WTC11 (cell line): ENCODE measurements at regions of chr16 and their contacts with region 1.

Region 1: DNA sequence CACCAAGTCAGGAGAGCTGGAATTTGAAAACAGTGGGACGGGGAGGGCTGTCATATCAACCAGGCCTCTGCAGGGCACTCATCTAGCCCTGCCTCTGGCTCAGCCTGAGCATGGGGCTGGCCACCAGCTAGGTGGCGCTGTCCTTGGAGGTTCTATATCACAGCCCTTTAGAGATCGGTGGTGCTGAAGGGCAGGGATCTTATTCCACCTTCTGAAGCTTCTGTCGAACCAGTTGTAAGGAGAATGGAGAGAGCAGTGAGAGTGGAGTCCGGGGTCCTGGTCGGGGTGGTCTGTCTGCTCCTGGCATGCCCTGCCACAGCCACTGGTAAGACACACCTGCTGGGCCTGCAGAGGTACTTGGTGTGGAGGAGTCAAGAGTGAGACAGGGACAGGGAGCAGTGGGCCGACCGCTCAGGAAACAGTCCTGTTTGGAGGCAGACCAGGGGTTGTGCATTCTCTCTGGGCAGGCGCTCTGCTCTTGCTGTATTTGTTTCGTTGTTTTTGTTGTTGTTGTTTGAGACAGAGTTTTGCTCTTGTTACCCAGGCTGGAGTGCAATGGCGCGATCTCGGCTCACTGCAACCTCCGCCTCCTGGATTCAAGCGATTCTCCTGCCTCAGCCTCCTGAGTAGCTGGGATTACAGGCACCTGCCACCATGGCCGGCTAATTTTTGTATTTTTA is at the start of gene CES3:
- DNase-seq: peak; percentile 91
- ATAC-seq: peak; percentile 100
- H3K4me3 Mint-ChIP-seq: peak within 1 kb of the TSS; percentile 66
- H3K27ac Mint-ChIP-seq: peak within 1 kb of the TSS; percentile 56
- H3K4me1 Mint-ChIP-seq: peaks cover 9% of the 10 kb centered on the region
- H3K27me3 Mint-ChIP-seq: peaks cover 8% of the 10 kb centered on the region; the same call in 1 of the 2 replicates
- CTCF ChIP-seq: peak; percentile 72
- total RNA-seq, gene CES3: 3.3 to 6.0 TPM (median 5.7 TPM) in 3 replicates

Region 2: GRCh38 chr16:66639091-66639885 is 321.9 kb before region 1 on chr16:
- CTCF ChIA-PET with region 1: no interaction called
- POLR2A ChIA-PET with region 1: no interaction called
- DNase-seq: no peak
- ATAC-seq: no peak; the same call in 1 of the 2 replicates
- H3K4me3 Mint-ChIP-seq: no peak overlapping the region
- H3K27ac Mint-ChIP-seq: peak overlapping the region; percentile 39
- H3K4me1 Mint-ChIP-seq: peaks cover 37% of the 10 kb centered on the region
- H3K27me3 Mint-ChIP-seq: no peaks in the 10 kb centered on the region
- CTCF ChIP-seq: no peak

Region 3: DNA sequence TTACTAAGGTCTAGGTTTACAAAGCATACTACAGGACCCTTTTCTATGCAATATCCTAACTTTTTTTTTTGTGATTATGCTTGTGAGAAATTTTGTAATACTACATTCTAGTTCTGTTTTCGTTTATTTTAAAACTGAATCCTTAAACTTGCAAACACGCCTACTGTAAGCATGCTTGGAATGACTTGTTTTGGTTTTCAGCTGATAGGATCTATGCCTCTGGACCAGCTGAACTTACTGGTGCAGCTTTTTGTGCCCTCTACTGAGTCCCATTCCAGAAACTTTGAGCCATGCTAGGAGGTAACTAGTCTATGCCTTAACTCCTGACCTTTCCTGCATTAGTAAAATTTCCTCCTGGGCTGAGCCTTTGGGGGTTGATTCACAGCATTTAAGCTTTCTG is 74.9 kb before region 1 on chr16:
- CTCF ChIA-PET with region 1: no interaction called
- POLR2A ChIA-PET with region 1: no interaction called
- DNase-seq: no peak
- ATAC-seq: no peak
- H3K4me3 Mint-ChIP-seq: no peak overlapping the region
- H3K27ac Mint-ChIP-seq: no peak overlapping the region
- H3K4me1 Mint-ChIP-seq: peaks cover 19% of the 10 kb centered on the region
- H3K27me3 Mint-ChIP-seq: no peaks in the 10 kb centered on the region
- CTCF ChIP-seq: no peak

Region 4: GRCh38 chr16:66924527-66925321 is 36.5 kb before region 1 on chr16:
- CTCF ChIA-PET with region 1: interaction called, 16 read pairs
- POLR2A ChIA-PET with region 1: no interaction called
- DNase-seq: peak; percentile 74
- ATAC-seq: peak; percentile 85
- H3K4me3 Mint-ChIP-seq: peak overlapping the region; percentile 73
- H3K27ac Mint-ChIP-seq: no peak overlapping the region
- H3K4me1 Mint-ChIP-seq: peaks cover 7% of the 10 kb centered on the region; the same call in 1 of the 2 replicates
- H3K27me3 Mint-ChIP-seq: peaks cover 59% of the 10 kb centered on the region
- CTCF ChIP-seq: no peak

Region 5: GRCh38 chr16:67104061-67104460 is 142.9 kb after region 1 on chr16:
- CTCF ChIA-PET with region 1: interaction called, 21 read pairs
- POLR2A ChIA-PET with region 1: no interaction called
- DNase-seq: peak; percentile 60
- ATAC-seq: peak; percentile 96
- H3K4me3 Mint-ChIP-seq: no peak overlapping the region
- H3K27ac Mint-ChIP-seq: no peak overlapping the region; the same call in none of the 2 replicates
- H3K4me1 Mint-ChIP-seq: 0 out of 2 replicates have a peak, but pooled peaks cover 2% of the 10 kb centered on the region
- H3K27me3 Mint-ChIP-seq: peaks cover 5% of the 10 kb centered on the region; the same call in 1 of the 2 replicates
- CTCF ChIP-seq: no peak

Region 6: DNA sequence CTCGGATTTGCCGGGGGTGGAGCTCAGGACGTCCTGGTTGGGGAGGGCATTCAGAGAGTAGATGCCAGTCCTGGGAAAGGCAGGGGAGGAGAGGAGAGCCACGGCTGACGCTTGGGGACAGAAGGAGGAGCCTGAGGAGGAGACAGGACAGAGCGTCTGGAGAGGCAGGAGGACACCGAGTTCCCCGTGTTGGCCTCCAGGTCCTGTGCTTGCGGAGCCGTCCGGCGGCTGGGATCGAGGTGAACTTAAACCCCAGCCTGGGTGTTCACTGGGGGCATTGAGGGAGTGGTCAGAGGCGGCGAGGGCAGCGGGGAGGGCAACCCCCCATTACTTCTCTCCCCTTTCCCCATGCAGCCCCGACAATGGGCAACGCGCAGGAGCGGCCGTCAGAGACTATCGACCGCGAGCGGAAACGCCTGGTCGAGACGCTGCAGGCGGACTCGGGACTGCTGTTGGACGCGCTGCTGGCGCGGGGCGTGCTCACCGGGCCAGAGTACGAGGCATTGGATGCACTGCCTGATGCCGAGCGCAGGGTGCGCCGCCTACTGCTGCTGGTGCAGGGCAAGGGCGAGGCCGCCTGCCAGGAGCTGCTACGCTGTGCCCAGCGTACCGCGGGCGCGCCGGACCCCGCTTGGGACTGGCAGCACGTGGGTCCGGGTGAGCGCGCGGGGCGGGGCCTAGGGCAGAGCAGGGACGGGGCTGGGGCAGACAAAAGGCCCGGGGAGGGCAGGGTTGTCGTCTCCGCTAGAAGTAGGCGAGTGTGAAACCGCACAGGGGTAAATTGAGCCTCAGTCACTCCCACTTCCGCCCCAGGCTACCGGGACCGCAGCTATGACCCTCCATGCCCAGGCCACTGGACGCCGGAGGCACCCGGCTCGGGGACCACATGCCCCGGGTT is 212.9 kb after region 1 on chr16:
- CTCF ChIA-PET with region 1: interaction called, 26 read pairs
- POLR2A ChIA-PET with region 1: interaction called, 3 read pairs
- DNase-seq: peak; percentile 76
- ATAC-seq: peak; percentile 19
- H3K4me3 Mint-ChIP-seq: peak overlapping the region; percentile 84
- H3K27ac Mint-ChIP-seq: no peak overlapping the region; the same call in 1 of the 2 replicates
- H3K4me1 Mint-ChIP-seq: peaks cover 36% of the 10 kb centered on the region
- H3K27me3 Mint-ChIP-seq: peaks cover 89% of the 10 kb centered on the region
- CTCF ChIP-seq: no peak

Region 7: GRCh38 chr16:67198238-67198734 is 237.1 kb after region 1 on chr16:
- CTCF ChIA-PET with region 1: interaction called, 16 read pairs
- POLR2A ChIA-PET with region 1: no interaction called
- DNase-seq: peak; percentile 53
- ATAC-seq: peak; percentile 13
- H3K4me3 Mint-ChIP-seq: peak overlapping the region; percentile 55
- H3K27ac Mint-ChIP-seq: peak overlapping the region; percentile 85; the same call in 1 of the 2 replicates
- H3K4me1 Mint-ChIP-seq: peaks cover 13% of the 10 kb centered on the region
- H3K27me3 Mint-ChIP-seq: no peaks in the 10 kb centered on the region
- CTCF ChIP-seq: no peak